ENCODE measurements at regions of chr6 and their contacts with region 1.

Region 1: GRCh38 chr6:134416418-134417154 is 98.7 kb upstream of the SGK1 start:
- DNase-seq: no peak
- ATAC-seq: no peak
- H3K4me3 ChIP-seq: no peak overlapping the region
- H3K27ac ChIP-seq: peak overlapping the region in 2 of 12 donors; percentile 38 to 78
- H3K4me1 ChIP-seq: peaks cover 0 to 41% (median 2%) of the 10 kb centered on the region in 12 donors
- H3K27me3 ChIP-seq: no peaks in the 10 kb centered on the region
- CTCF ChIP-seq: no peak
- POLR2A ChIP-seq: no peak

Region 2: GRCh38 chr6:134398453-134398852 is 18.1 kb before region 1 on chr6:
- intact Hi-C with region 1: loop called in 1 of 10 experiments (anchors 1 kb)
- DNase-seq: no peak
- ATAC-seq: no peak
- H3K4me3 ChIP-seq: no peak overlapping the region
- H3K27ac ChIP-seq: peak overlapping the region in 1 of 12 donors; percentile 5
- H3K4me1 ChIP-seq: peaks cover 0 to 7% (median 0%) of the 10 kb centered on the region in 12 donors
- H3K27me3 ChIP-seq: no peaks in the 10 kb centered on the region
- CTCF ChIP-seq: no peak
- POLR2A ChIP-seq: no peak